Activated naive CD4-positive, alpha-beta T cell treated with anti-CD3 and anti-CD28 coated beads for 36 hours (primary cell): ENCODE measurements at regions of chr3 and their contacts with region 1.

Region 1: DNA sequence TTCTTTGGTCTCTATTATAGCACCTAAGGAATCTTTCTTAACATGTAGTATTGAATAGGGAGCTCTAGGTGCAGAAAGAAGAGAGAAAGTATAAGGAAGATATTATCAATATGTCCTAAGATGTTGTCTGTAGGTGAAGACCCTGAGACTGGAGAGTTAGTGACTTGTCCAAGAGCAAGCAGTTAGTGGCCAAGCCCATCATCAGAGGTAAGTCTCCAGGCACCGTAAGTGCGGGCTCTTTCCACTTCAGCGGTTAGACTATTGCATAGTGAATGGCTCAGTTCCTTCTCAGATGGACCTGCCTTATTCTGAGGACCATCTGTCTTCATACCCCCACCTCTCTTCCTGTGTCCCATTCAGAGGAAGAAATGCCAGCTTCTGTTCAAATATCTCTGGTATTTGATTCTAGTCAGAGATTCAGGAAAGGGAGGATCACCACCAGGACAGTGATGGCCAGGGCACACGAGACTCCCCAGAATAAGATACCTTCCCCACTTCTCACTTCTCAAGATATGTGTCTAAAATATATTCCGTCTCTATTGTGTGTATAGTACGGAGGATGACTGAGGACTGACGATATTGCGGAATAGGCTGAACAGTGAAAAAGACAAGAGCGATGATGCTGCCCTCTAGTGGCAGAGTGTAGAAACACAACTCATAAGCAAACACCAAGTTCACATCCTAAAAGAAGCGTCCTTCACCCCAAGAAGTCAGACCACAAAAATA is 19.1 kb upstream of the ADGRG7 start:
- DNase-seq: peak; percentile 79
- H3K4me3 Mint-ChIP-seq: peak overlapping the region; percentile 11
- H3K27ac Mint-ChIP-seq: no peak overlapping the region
- H3K4me1 Mint-ChIP-seq: peaks cover 3% of the 10 kb centered on the region
- H3K27me3 Mint-ChIP-seq: no peaks in the 10 kb centered on the region

Region 2: DNA sequence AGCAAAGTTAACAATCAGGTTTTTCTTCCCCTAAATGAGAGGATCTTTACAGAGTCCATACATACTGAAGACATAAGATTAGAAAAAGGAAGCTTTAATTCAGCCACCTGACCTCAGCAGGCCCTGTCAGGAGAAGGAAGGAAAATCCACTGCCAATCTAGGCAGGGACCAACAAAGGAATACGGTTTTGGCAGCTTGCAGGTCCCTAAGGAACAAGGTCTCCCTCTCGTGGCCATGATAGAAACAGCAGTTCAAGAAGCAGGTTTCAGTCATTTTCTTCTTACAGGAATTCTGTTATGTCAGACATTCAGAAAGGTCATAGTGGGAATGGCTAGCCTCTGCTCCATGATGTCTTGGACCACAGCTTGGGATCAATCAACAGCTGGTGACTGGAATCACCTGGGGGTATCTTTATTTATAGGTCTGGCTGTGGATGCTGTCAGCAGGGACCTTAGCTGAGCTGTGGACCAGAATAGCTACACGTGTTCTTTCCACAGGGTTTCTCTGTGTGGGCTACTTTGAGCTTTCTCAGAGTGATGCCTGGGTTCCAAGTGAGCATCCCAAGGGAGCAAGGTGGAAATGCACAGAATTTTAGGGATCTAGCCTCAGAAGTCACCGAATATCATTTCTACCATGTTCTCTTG is 782.0 kb before region 1 on chr3:
- CTCF ChIA-PET with region 1: no interaction called
- intact Hi-C with region 1: no loop called
- DNase-seq: peak; percentile 43
- H3K4me3 Mint-ChIP-seq: no peak overlapping the region
- H3K27ac Mint-ChIP-seq: no peak overlapping the region
- H3K4me1 Mint-ChIP-seq: no peaks in the 10 kb centered on the region
- H3K27me3 Mint-ChIP-seq: no peaks in the 10 kb centered on the region

Region 3: DNA sequence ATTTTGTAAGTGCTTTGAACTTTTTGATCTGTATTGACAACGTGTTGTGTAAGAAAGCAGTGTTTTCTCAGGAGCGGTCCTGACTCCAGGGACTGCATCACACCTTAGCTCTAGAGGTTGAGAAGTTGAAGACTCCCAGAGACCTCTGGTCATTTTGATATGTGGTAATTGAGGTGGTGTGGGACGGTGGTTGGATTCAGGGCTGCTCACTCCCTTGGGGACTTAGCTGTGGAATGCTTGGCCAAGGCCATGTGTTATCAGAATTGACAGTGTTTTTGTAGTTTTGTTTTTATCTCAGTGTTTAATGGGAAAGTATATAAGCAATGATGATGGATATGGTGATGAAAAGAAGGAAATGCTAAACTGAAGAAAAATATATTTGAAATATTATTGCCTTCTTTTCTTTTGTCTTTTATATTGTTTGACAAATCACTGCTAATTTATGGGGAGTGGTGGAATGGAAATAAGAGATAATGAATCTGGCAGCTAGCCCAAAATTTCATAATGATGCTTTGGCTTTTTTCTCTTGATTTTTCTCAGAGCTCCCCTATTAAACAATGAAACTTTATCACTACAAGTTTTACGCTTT is 756.6 kb before region 1 on chr3:
- CTCF ChIA-PET with region 1: no interaction called
- intact Hi-C with region 1: loop called (anchors 1 kb)
- DNase-seq: no peak
- H3K4me3 Mint-ChIP-seq: no peak overlapping the region
- H3K27ac Mint-ChIP-seq: no peak overlapping the region
- H3K4me1 Mint-ChIP-seq: peaks cover 12% of the 10 kb centered on the region
- H3K27me3 Mint-ChIP-seq: no peaks in the 10 kb centered on the region

Region 4: GRCh38 chr3:100068826-100069225 is 521.5 kb before region 1 on chr3:
- CTCF ChIA-PET with region 1: no interaction called
- intact Hi-C with region 1: loop called (anchors 1 kb)
- DNase-seq: peak; percentile 90
- H3K4me3 Mint-ChIP-seq: no peak overlapping the region
- H3K27ac Mint-ChIP-seq: no peak overlapping the region
- H3K4me1 Mint-ChIP-seq: peaks cover 30% of the 10 kb centered on the region
- H3K27me3 Mint-ChIP-seq: no peaks in the 10 kb centered on the region

Region 5: GRCh38 chr3:100113723-100114412 is 476.4 kb before region 1 on chr3:
- CTCF ChIA-PET with region 1: no interaction called
- intact Hi-C with region 1: no loop called
- DNase-seq: no peak
- H3K4me3 Mint-ChIP-seq: no peak overlapping the region
- H3K27ac Mint-ChIP-seq: no peak overlapping the region
- H3K4me1 Mint-ChIP-seq: peaks cover 2% of the 10 kb centered on the region
- H3K27me3 Mint-ChIP-seq: no peaks in the 10 kb centered on the region

Region 6: DNA sequence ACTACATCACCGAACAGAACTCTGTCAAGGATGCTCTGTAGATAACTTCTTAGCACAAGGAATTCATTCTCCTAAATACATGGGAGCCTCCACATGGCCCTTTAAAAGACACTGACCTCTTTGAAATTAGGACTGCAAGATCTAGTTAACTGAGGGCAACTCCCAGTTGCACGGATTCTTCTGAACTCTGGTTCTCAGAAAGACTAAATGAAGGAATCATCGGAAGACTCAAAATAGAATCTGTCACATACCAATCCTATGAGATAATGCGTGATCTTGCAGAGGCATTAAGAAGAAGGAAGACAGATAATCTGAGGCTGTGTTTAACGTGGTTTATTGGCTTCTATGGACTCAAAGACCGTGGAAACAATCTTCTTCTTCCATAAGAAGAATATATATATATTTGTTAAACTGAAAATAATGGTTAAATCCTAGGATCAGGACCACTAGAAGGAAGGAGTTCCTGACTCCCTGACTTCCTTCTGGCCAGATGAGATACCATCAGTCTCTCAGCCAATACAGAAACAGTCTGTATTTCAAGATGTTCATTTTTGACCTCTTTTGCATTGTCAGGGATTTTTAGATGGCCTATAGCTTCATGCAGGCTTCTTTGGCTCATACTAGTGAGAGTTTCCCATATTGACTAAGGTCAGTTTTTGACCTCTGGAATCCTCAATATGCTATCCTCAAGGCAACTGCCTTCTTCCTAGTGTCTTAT is 363.4 kb before region 1 on chr3:
- CTCF ChIA-PET with region 1: no interaction called
- intact Hi-C with region 1: no loop called
- DNase-seq: no peak
- H3K4me3 Mint-ChIP-seq: no peak overlapping the region
- H3K27ac Mint-ChIP-seq: no peak overlapping the region
- H3K4me1 Mint-ChIP-seq: peaks cover 8% of the 10 kb centered on the region
- H3K27me3 Mint-ChIP-seq: no peaks in the 10 kb centered on the region

Region 7: DNA sequence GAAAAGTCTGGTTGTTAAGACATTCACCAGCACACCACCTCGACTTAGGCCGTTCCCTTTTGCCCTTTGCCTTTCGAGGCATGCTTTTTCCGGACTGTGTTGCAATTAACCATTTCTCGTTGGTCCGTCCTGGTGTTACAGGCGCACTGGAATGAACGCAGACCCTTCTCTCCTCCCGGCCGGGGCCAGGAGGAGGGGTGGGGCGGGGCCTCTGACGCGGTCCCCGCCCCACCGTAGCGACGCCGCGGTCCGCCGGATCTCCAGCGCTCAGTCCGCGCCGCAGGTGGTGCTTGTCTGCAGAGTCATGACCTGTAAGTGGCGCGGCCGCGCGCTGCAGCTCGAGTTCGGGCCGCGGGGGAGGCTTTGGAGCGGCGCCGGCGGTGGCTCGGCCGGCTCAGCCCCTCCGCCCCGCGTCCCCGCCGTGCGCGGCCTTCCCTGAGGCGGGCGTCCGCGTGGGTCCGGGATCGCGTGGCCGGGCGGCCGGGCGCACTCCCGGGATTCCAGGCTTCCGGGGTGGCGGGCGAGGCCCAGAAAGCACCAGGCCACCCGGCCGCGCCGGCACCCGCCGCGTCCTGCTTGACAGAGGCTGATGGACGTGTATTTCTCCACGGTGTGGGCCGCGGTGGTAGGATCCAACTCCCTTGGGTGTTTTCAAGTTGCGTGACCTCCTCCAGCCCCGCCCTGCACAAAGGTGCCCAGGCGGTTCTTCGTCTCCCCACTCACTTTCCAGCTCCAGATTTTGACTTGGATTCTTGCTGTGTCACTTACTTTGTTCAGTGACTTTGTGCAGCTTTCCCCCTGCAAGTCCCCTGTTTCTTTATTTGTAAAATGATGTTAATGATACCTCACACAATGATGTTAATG is 255.6 kb before region 1 on chr3 and contains the start of gene NIT2:
- CTCF ChIA-PET with region 1: no interaction called
- intact Hi-C with region 1: loop called (anchors 1 kb)
- DNase-seq: peak; percentile 82
- H3K4me3 Mint-ChIP-seq: peak within 1 kb of the TSS; percentile 86
- H3K27ac Mint-ChIP-seq: peak within 1 kb of the TSS; percentile 86
- H3K4me1 Mint-ChIP-seq: peaks cover 26% of the 10 kb centered on the region
- H3K27me3 Mint-ChIP-seq: no peaks in the 10 kb centered on the region
- total RNA-seq, gene NIT2: 69.1 to 76.0 TPM

Region 8: DNA sequence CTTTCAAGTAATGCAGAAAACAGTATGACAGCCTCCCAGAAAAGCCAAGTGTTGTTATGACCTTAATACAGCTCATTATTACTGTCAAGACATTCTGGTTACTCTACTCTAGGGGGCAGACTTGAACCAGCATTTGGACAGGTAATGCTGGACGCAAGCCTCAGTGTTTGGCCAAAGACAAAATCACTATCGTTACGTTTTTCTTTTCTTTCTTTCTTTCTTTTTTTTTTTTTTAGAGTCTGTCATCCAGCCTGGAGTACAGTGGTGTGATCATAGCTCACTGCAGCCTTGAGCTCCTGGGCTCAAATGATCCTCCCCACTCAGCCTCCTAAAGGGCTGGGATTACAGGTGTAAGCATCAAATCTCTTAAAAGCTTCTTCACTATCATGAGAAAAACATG is 127.3 kb before region 1 on chr3:
- CTCF ChIA-PET with region 1: interaction called, 115 read pairs
- intact Hi-C with region 1: loop called (anchors 1 kb)
- DNase-seq: peak; percentile 27
- H3K4me3 Mint-ChIP-seq: no peak overlapping the region
- H3K27ac Mint-ChIP-seq: no peak overlapping the region
- H3K4me1 Mint-ChIP-seq: peaks cover 5% of the 10 kb centered on the region
- H3K27me3 Mint-ChIP-seq: peaks cover 3% of the 10 kb centered on the region

Region 9: DNA sequence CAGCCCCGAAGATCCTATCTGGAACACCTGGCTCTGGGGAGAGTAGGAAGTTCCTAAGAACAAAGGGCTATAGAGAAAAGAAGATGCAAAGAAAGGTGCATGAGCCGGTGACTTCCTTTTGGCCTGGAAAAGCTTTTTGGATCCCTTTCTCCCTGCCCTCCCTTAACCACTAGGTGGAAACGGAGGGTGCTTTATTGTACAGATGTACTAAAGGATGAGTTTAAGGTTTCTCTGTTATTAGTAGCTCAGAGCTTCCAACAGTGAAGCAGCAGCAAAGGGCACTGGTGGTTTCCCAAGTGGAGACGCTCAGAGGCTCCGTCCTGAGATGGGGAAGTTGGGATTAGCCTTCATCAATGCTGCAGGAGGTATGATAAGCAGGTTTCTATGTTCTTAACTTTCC is 13.2 kb after region 1 on chr3:
- CTCF ChIA-PET with region 1: interaction called, 38 read pairs
- intact Hi-C with region 1: no loop called
- DNase-seq: no peak
- H3K4me3 Mint-ChIP-seq: peak overlapping the region; percentile 37
- H3K27ac Mint-ChIP-seq: no peak overlapping the region
- H3K4me1 Mint-ChIP-seq: peaks cover 25% of the 10 kb centered on the region
- H3K27me3 Mint-ChIP-seq: peaks cover 2% of the 10 kb centered on the region

Region 10: DNA sequence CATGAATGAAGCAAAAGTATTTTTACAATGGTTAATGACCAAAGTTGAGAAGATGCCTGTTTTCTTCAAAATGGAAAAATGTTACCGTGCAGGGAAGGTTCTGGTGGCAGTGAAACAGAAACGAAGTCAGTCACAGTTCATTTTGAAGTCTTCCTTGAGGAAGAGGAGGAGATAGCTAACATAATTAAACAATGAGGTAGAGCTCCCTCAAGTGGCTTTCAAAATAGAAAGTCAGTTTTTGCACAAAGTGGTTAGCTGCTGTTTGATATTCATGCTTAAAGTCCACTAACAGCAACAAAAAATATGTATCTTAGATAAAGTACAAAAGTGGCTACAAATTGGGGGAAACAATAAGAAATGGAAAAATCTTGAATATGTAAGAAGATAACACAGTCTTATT is 206.3 kb after region 1 on chr3:
- CTCF ChIA-PET with region 1: interaction called, 12 read pairs
- intact Hi-C with region 1: no loop called
- DNase-seq: no peak
- H3K4me3 Mint-ChIP-seq: peak overlapping the region; percentile 27
- H3K27ac Mint-ChIP-seq: no peak overlapping the region
- H3K4me1 Mint-ChIP-seq: peaks cover 5% of the 10 kb centered on the region
- H3K27me3 Mint-ChIP-seq: no peaks in the 10 kb centered on the region

Region 11: DNA sequence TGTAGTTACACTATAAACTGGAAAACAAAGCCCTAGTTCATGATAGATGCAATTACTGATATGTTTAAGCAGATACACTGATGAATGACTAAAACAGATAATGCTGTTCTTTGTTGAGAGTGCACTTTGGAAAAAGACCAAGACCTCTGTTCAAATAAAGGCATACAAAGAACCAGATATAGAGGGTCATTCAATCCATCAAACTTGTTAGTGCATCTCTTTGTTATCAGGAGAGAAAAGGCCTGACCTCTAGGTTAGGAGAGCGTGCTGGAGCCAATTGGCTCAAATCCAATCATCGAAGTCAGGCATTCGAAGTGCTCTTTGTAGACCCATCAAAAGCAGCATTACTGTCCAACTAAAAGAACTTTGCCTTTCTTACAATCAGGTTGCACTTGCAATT is 243.2 kb after region 1 on chr3:
- CTCF ChIA-PET with region 1: no interaction called
- intact Hi-C with region 1: no loop called
- DNase-seq: no peak
- H3K4me3 Mint-ChIP-seq: no peak overlapping the region
- H3K27ac Mint-ChIP-seq: no peak overlapping the region
- H3K4me1 Mint-ChIP-seq: no peaks in the 10 kb centered on the region
- H3K27me3 Mint-ChIP-seq: peaks cover 10% of the 10 kb centered on the region